SK-N-SH (cell line): ENCODE measurements at regions of chr2 and their contacts with region 1.

Region 1: GRCh38 chr2:64653349-64654062 is at the start of gene SERTAD2:
- DNase-seq: peak; percentile 98
- H3K4me3 ChIP-seq: peak within 1 kb of the TSS; percentile 85
- H3K27ac ChIP-seq: peak within 1 kb of the TSS; percentile 92 to 94
- H3K4me1 ChIP-seq: peaks cover 21 to 44% of the 10 kb centered on the region in 2 experiments
- H3K27me3 ChIP-seq: no peaks in the 10 kb centered on the region
- CTCF ChIP-seq: peak; percentile 28
- EP300 ChIP-seq: no peak
- RAD21 ChIP-seq: no peak
- polyA plus RNA-seq, gene SERTAD2: 8.8 and 9.1 TPM in 2 replicates

Region 2: DNA sequence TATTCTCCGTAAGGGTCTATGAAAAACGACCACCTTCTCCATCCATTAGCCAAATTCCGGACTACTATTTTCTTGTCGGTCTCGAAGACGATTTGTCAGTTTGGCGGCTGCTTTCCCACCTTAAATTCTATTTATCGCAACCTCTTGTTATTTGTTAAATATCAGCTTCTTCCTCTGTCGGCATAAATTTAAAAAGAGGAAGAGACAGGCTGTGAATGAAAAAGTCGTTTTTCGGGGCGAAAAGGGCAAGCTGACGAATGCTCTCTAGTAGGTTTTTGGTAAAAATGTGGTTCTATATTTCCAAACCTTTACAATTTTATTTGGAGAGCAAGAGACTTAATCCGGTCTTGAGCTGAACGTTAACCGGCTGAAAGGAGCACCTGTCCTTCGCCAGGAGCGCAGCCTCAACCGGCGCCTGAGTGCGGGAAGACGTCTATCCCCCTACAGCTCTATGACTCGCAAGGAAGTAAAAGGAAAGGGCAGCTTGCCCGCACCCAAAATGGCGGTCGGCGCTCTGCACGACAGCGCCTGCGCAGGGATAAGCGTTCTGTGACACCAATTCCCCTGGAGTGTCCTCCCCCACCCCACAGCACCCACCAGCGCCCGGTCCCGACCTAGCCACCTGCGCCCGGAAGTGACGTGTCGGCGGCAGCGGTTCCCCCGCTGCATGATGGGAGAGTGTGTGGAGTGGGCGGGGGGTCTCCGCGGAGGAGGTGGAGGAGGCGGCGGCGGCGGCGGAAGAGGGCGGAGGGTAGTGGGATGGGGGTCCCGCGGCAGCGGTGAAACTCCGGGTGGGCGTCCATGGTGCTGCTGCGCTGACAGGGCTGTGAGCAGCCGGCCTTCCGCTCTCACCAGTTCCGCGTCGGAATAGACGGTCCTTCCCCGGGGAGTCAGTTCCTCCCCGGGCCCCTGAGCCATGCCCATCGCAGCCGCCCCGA is 129.6 kb before region 1 on chr2 and contains the start of gene AFTPH:
- CTCF ChIA-PET with region 1: interaction called, 33 read pairs
- POLR2A ChIA-PET with region 1: interaction called, 10 read pairs
- DNase-seq: peak; percentile 99
- H3K4me3 ChIP-seq: peak within 1 kb of the TSS; percentile 88 to 94
- H3K27ac ChIP-seq: peak within 1 kb of the TSS; percentile 71 to 92
- H3K4me1 ChIP-seq: peaks cover 0 to 6% of the 10 kb centered on the region in 2 experiments; a peak in 2 of 4 replicates
- H3K27me3 ChIP-seq: peaks cover 9% of the 10 kb centered on the region; the same call in 1 of the 2 replicates
- CTCF ChIP-seq: no peak
- EP300 ChIP-seq: 0 out of 4 replicates have a peak, but pooled peaks of 1 of the 2 experiments have one; percentile 7
- RAD21 ChIP-seq: no peak
- polyA plus RNA-seq, gene AFTPH: 7.4 and 9.8 TPM in 2 replicates

Region 3: DNA sequence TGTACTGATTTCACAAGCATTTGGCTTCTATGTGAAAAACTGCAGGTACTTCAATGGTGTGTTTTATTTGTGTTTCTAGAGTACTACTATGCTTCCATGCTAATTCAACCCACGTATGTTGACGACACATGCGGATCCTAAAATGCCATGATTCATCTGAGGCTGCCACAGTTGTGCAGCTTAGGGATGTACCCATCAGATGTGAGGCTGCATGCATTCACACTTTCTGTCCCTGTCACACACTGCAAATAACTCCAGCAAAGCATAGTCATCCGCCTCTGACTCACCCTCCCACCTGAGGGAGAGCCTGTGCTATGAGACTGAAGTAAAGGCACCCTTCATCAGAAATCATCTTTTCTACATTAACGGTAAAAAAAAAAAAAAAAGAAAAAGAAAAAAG is 22.4 kb after region 1 on chr2:
- CTCF ChIA-PET with region 1: interaction called, 13 read pairs
- POLR2A ChIA-PET with region 1: interaction called, 6 read pairs
- DNase-seq: no peak
- H3K4me3 ChIP-seq: no peak overlapping the region
- H3K27ac ChIP-seq: no peak overlapping the region
- H3K4me1 ChIP-seq: peaks cover 0 to 11% of the 10 kb centered on the region in 2 experiments; a peak in 3 of 4 replicates
- H3K27me3 ChIP-seq: no peaks in the 10 kb centered on the region
- CTCF ChIP-seq: no peak
- EP300 ChIP-seq: no peak
- RAD21 ChIP-seq: no peak

Region 4: DNA sequence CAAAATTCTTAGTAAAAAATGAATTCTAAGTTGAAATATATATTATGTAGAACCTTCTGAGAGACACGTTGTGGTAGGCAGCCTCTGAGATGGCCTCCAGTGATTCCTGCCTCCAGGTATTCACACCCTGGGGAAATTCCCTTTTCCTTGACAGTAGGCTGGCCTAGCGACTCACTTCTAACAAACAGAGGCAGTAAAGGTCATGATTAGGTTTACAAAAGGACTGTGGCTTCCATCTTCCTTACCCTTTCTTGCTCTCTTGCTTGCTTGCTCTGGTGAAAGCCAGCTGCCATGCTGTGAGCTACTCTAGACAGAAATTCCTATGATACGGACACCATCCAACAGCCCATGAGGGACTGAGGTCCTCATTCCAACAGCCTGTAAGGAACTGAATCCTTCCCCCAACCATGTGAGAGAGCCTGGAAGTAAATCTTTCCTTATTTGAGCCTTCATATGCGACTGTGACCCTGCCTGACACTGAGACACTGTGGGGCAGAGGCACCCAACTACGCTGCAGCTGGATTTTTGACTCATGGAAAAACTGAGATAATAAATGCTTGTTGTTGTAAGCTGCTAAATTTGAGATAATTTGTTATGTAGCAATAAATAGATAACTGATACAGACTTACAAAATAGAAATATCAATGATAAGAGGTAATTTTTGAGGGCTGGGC is 32.9 kb after region 1 on chr2:
- CTCF ChIA-PET with region 1: no interaction called
- POLR2A ChIA-PET with region 1: no interaction called
- DNase-seq: no peak
- H3K4me3 ChIP-seq: no peak overlapping the region
- H3K27ac ChIP-seq: no peak overlapping the region
- H3K4me1 ChIP-seq: no peaks in the 10 kb centered on the region
- H3K27me3 ChIP-seq: no peaks in the 10 kb centered on the region
- CTCF ChIP-seq: no peak
- EP300 ChIP-seq: no peak
- RAD21 ChIP-seq: no peak

Region 5: GRCh38 chr2:64750817-64751285 is 97.3 kb after region 1 on chr2:
- CTCF ChIA-PET with region 1: interaction called, 9 read pairs
- POLR2A ChIA-PET with region 1: interaction called, 33 read pairs
- DNase-seq: no peak
- H3K4me3 ChIP-seq: peak overlapping the region; percentile 88 to 90
- H3K27ac ChIP-seq: peak overlapping the region; percentile 94 to 98
- H3K4me1 ChIP-seq: peaks cover 4 to 6% of the 10 kb centered on the region in 2 experiments; a peak in 3 of 4 replicates
- H3K27me3 ChIP-seq: no peaks in the 10 kb centered on the region
- CTCF ChIP-seq: no peak
- EP300 ChIP-seq: peak in 1 of 2 experiments; percentile 29; a peak in 1 of 4 replicates
- RAD21 ChIP-seq: 0 out of 2 replicates have a peak, but pooled peaks have one; percentile 12

Region 6: GRCh38 chr2:64865073-64865830 is 211.7 kb after region 1 on chr2:
- CTCF ChIA-PET with region 1: interaction called, 8 read pairs
- POLR2A ChIA-PET with region 1: interaction called, 10 read pairs
- DNase-seq: peak; percentile 95
- H3K4me3 ChIP-seq: peak overlapping the region; percentile 52 to 63
- H3K27ac ChIP-seq: peak overlapping the region; percentile 86 to 89
- H3K4me1 ChIP-seq: peaks cover 0 to 8% of the 10 kb centered on the region in 2 experiments; a peak in 1 of 4 replicates
- H3K27me3 ChIP-seq: no peaks in the 10 kb centered on the region
- CTCF ChIP-seq: peak; percentile 56; the same call in 1 of the 2 replicates
- EP300 ChIP-seq: peak in 1 of 2 experiments; percentile 27; a peak in 3 of 4 replicates
- RAD21 ChIP-seq: peak; percentile 76